ENCODE measurements at regions of chr13 and their contacts with region 1.

Region 1: DNA sequence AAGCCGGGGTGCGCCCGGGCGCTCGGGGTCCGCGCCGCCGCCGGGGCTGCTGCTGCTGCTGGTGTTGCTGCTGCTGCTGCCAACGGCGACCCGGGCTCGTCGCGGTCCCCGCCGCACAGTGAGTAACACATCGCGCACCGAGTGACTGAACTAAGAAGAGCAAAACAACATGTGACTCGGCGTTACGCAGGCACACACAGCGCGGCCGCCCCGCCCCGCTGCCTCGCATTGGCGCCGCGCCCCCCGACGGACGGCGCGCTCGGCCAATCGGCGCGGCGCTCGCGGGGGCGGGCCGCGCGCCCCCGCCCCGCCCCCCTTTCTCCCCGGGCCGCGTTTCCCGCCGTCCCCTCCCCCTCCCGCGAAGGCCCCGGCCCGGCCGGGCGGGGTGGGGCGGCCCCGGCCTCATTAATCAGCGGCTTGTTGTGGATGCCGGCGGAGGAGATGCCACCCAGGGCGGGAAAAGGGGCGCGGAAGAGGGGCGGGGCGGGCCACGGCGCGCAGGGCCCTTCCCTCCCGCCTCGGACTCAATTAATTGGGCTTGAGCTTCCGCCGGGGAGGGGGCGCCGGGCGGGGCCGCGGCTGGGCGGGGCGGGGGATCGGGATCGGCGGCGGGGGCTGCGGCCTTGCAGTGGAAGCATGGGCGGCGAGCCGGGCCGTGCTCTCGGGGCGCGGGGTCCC is at the start of gene IRS2:
- DNase-seq: peak; percentile 89
- H3K4me3 Mint-ChIP-seq: peak within 1 kb of the TSS; percentile 78
- H3K27ac Mint-ChIP-seq: peak within 1 kb of the TSS; percentile 78
- H3K4me1 Mint-ChIP-seq: peaks cover 12% of the 10 kb centered on the region
- H3K27me3 Mint-ChIP-seq: peaks cover 26% of the 10 kb centered on the region
- total RNA-seq, gene IRS2: 3.9 and 4.3 TPM in 2 replicates

Region 2: DNA sequence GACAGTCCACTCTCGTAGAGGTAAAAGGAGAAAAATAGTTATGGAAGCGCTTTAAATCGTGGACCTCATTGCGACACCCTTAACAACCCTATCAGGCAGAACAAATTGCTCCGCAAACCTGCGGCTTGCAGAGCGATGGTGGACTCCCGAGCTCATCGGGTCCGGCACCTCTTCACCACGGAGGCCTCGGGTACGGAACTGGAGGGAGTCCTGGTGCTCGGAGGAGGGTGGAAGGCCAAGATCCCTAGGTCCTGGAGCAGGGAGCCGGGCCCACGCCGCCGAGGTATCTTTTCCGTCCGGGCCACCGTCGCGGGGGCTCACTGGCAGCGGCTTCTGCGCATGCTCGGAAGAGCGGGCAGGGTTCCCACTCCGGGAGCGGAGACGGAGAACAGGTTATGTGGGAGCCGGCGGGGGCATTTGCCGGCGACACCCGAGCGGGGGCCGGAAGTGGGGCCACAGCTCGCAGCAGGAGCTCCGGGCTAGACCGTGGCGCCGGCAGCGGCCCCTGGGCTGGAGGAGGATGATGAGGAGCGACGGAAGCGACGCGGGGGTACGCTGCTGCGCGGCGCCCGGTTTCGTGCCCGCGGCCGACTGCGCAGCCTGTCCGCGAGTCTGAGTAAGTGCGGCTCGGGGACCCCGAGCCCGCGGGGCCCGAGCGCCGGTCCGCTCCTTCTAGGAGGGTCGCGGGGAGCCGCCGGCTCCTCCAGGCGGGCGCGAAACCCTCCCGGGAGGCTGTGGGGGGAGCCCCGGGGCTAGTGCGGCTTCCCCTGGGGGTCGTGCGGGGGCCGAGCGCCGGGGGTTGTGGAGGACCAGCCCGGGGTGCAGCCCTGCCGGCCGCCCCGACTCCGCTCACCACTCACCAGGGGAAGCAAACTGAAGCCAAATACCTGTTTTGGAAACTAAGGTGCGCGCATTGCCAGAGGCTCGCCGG is 1568.3 kb before region 1 on chr13 and contains the start of gene ABHD13:
- intact Hi-C with region 1: loop called (anchors 1 kb)
- DNase-seq: peak; percentile 89
- H3K4me3 Mint-ChIP-seq: peak within 1 kb of the TSS; percentile 95
- H3K27ac Mint-ChIP-seq: peak within 1 kb of the TSS; percentile 94
- H3K4me1 Mint-ChIP-seq: peaks cover 44% of the 10 kb centered on the region
- H3K27me3 Mint-ChIP-seq: peaks cover 2% of the 10 kb centered on the region
- total RNA-seq, gene ABHD13: 8.0 and 8.5 TPM in 2 replicates

Region 3: DNA sequence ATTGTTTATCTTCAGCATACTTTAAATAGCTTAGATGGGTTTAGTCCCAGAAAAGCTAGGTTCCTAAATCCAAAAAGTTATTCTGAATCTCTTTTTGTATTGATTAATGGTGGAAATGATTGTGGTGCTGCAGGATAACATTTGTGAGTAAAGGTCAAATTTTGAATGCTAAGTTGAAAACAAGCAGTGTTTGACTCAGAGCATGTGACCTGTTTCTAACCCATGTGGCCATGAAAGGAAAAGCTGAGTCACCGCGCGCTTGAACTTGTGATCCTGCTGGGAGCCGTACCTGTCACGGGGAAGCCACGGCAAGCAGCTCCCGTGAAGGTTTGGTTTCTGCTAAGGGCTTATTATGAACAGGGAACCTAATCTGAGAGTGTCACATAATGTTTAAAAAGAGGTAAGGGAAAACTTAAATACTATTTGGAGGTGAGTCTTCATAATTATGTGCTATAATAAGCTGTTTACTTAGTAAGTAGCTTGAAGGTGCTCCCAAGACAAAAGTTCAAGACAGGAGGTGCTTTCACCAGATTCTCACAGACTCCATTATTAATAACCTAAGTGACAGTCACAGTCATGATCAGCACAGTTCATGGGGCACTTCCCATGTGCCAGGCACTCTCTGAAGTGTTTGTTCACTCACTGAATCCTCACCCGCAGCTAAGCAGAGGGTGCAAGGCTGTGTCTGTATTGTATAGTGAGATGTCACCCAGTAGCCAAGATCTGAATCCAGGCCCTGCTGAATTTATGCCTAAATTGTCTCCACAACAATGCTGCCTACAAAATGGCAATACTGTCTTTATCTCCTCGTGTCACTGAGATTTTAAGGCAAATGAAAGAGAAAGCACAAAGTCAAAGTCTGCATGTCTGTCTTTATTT is 870.7 kb before region 1 on chr13:
- intact Hi-C with region 1: loop called (anchors 2 kb)
- DNase-seq: peak; percentile 72
- H3K4me3 Mint-ChIP-seq: peak overlapping the region; percentile 80
- H3K27ac Mint-ChIP-seq: peak overlapping the region; percentile 97
- H3K4me1 Mint-ChIP-seq: peaks cover 30% of the 10 kb centered on the region
- H3K27me3 Mint-ChIP-seq: peaks cover 2% of the 10 kb centered on the region

Region 4: DNA sequence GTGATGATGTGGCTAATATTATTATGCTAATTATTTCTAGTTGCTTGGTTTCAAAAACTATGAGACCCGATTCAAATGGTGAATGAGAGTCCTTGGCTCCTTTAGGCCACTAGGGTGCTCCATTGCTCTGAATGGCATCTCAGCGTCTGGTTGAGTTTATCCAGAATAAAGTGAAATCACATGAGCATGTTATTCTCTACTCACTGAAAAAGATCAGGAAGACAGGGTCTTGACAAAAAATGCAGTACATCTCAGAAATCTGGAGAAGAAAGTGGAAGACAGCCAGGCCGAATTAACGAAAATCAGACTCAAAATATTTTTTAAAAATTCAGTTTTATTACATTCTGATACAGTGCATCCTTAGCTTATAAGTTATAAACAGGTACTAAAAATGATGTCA is 641.0 kb before region 1 on chr13:
- intact Hi-C with region 1: loop called (anchors 1 kb)
- DNase-seq: no peak
- H3K4me3 Mint-ChIP-seq: no peak overlapping the region
- H3K27ac Mint-ChIP-seq: no peak overlapping the region
- H3K4me1 Mint-ChIP-seq: no peaks in the 10 kb centered on the region
- H3K27me3 Mint-ChIP-seq: peaks cover 18% of the 10 kb centered on the region

Region 5: GRCh38 chr13:109610517-109610916 is 176.1 kb before region 1 on chr13:
- intact Hi-C with region 1: loop called (anchors 5 kb)
- DNase-seq: no peak
- H3K4me3 Mint-ChIP-seq: no peak overlapping the region
- H3K27ac Mint-ChIP-seq: no peak overlapping the region
- H3K4me1 Mint-ChIP-seq: no peaks in the 10 kb centered on the region
- H3K27me3 Mint-ChIP-seq: peaks cover 8% of the 10 kb centered on the region

Region 6: GRCh38 chr13:110561344-110562035 is 774.9 kb after region 1 on chr13 and contains the start of gene RAB20:
- intact Hi-C with region 1: loop called (anchors 2 kb)
- DNase-seq: peak; percentile 62
- H3K4me3 Mint-ChIP-seq: peak within 1 kb of the TSS; percentile 97
- H3K27ac Mint-ChIP-seq: peak within 1 kb of the TSS; percentile 93
- H3K4me1 Mint-ChIP-seq: peaks cover 41% of the 10 kb centered on the region
- H3K27me3 Mint-ChIP-seq: peaks cover 31% of the 10 kb centered on the region
- total RNA-seq, gene RAB20: 1.1 and 1.5 TPM in 2 replicates